ENCODE measurements at regions of chr1 and their contacts with region 1.

Region 1: GRCh38 chr1:145906954-145907753 is 2.7 kb downstream of the ITGA10 start:
- DNase-seq: no peak
- H3K4me3 ChIP-seq: no peak overlapping the region
- H3K27ac ChIP-seq: no peak overlapping the region
- H3K4me1 ChIP-seq: no peaks in the 10 kb centered on the region
- H3K27me3 ChIP-seq: no peaks in the 10 kb centered on the region
- CTCF ChIP-seq: no peak
- EP300 ChIP-seq: no peak
- POLR2A ChIP-seq: no peak

Region 2: DNA sequence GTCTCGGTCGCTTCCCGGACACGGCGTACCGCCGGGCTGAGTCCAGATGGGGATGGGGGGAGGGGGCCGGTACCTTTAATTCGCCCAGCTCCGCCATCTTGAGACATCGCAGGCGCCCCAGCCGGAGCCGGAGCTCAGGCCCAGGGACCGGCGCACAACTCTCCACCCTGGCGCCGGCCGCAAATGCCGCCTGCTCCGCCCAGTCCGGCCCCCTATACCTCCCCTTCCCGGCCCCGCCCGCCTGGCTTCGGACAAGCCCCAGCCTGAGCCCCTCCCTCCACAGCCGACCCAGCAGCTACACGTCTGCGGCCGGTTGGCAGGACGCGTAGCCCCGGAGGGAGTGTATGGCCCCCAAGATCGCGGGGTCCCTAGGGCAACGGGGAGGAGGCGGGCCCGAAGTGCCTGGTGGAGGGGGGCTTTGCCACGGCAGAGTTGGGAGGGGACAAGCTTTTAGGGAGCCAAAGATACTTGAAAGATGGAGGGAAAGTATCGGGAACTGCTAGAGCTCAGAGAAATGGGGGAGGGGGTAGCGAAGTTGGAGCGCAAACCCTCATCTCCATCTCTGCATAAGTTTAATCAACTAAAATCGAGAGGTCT is 48.2 kb before region 1 on chr1 and contains the start of gene PIAS3:
- intact Hi-C with region 1: loop called in 1 of 4 experiments (anchors 10 kb)
- DNase-seq: peak; percentile 93 to 95 (median 95)
- H3K4me3 ChIP-seq: peak within 1 kb of the TSS; percentile 85
- H3K27ac ChIP-seq: peak within 1 kb of the TSS; percentile 89
- H3K4me1 ChIP-seq: peaks cover 3% of the 10 kb centered on the region
- H3K27me3 ChIP-seq: no peaks in the 10 kb centered on the region
- CTCF ChIP-seq: no peak
- EP300 ChIP-seq: no peak
- POLR2A ChIP-seq: peak; percentile 66
- total RNA-seq, gene PIAS3: 22.9 to 64.1 (median 40.1) TPM

Region 3: GRCh38 chr1:145891587-145892485 is 15.3 kb before region 1 on chr1:
- intact Hi-C with region 1: loop called in 1 of 4 experiments (anchors 2 kb)
- DNase-seq: peak; percentile 95 to 97 (median 96)
- H3K4me3 ChIP-seq: no peak overlapping the region
- H3K27ac ChIP-seq: peak overlapping the region; percentile 78 to 82
- H3K4me1 ChIP-seq: peaks cover 8% of the 10 kb centered on the region
- H3K27me3 ChIP-seq: no peaks in the 10 kb centered on the region
- CTCF ChIP-seq: peak; percentile 92 to 98 (median 94)
- EP300 ChIP-seq: no peak
- POLR2A ChIP-seq: peak; percentile 9